ENCODE measurements at regions of chr4 and their contacts with region 1.

Region 1: GRCh38 chr4:153127760-153128494 is 76.3 kb upstream of the TRIM2 start:
- DNase-seq: peak; percentile 74
- CTCF ChIP-seq: peak; percentile 83

Region 2: GRCh38 chr4:152850377-152850776 is 277.6 kb before region 1 on chr4:
- CTCF ChIA-PET with region 1: interaction called, 32 read pairs
- POLR2A ChIA-PET with region 1: no interaction called
- DNase-seq: no peak
- CTCF ChIP-seq: no peak

Region 3: DNA sequence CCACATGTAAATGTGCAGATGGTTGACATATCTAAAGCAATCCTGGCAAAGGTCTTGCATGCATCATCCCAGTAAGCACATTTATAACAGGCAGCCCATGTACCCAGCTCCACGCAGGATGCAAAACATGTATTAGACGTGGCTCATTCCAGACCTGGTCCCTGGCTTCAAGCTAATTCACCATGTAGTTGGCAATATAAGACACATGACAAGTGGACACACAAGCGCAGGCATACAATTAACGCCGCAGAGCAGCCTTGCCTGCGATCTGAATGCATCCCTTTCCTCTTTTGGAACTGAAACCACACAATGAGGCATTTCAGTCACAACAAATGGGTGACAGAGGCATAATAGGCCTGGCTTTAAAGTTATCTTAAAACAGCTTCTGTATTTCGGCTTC is 38.2 kb before region 1 on chr4:
- CTCF ChIA-PET with region 1: interaction called, 64 read pairs
- POLR2A ChIA-PET with region 1: no interaction called
- DNase-seq: no peak
- CTCF ChIP-seq: no peak

Region 4: GRCh38 chr4:153115322-153116290 is 12.3 kb before region 1 on chr4:
- CTCF ChIA-PET with region 1: interaction called, 71 read pairs
- POLR2A ChIA-PET with region 1: no interaction called
- DNase-seq: no peak
- CTCF ChIP-seq: no peak

Region 5: GRCh38 chr4:153159728-153160221 is 31.8 kb after region 1 on chr4:
- CTCF ChIA-PET with region 1: interaction called, 19 read pairs
- POLR2A ChIA-PET with region 1: no interaction called
- DNase-seq: no peak
- CTCF ChIP-seq: no peak

Region 6: GRCh38 chr4:153266988-153267387 is 139.1 kb after region 1 on chr4:
- CTCF ChIA-PET with region 1: no interaction called
- POLR2A ChIA-PET with region 1: no interaction called
- DNase-seq: no peak
- CTCF ChIP-seq: no peak